ENCODE measurements at regions of chr4 and their contacts with region 1.

Region 1: DNA sequence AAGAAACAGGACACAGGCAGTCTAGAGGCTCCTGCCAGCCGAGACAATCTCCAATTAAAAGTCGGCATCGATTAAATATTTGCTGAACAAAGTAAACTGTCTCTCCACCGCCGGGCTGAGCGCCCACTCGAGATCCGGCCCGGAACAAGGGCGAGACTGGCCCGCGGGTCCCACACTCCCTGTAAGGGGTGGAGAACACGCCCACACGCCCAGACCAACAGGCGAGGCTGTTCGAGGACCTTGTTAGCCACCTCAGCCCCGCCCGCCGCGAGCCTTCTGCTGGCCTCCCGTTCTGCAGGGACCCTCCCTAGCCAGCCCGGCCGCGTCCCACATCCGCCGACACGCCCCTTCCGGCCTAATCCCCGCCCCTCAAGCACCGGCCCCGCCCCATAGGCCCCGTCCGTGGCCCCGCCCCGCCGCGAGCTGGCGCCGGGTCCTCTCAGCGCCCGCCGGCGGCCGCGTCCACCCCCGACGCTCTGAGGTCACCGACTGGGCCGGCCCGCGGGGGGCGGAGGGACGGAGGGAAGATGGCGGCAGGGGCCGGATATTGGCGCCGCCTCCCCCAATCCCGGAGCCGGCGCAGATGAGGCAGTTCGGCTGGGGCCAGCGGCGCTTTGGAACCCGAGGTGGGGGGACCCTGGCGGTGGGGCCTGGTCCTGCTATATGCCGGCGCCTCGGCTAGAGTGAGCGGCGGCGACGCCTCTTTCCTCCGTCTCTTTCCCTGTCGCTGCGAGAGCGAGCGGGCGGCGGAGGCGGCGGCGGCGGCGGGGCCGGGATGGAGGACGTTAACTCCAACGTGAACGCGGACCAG is at the start of gene SLAIN2:
- DNase-seq: peak; percentile 98
- H3K4me3 Mint-ChIP-seq: peak within 1 kb of the TSS; percentile 98
- H3K27ac Mint-ChIP-seq: peak within 1 kb of the TSS; percentile 97
- H3K4me1 Mint-ChIP-seq: peaks cover 61% of the 10 kb centered on the region
- H3K27me3 Mint-ChIP-seq: no peaks in the 10 kb centered on the region
- total RNA-seq, gene SLAIN2: 60.4 and 67.1 TPM in 2 replicates

Region 2: GRCh38 chr4:47914220-47914925 is 426.8 kb before region 1 on chr4 and contains the start of gene NFXL1:
- intact Hi-C with region 1: loop called (anchors 2 kb)
- DNase-seq: peak; percentile 93
- H3K4me3 Mint-ChIP-seq: peak within 1 kb of the TSS; percentile 90
- H3K27ac Mint-ChIP-seq: peak within 1 kb of the TSS; percentile 83
- H3K4me1 Mint-ChIP-seq: peaks cover 22% of the 10 kb centered on the region
- H3K27me3 Mint-ChIP-seq: no peaks in the 10 kb centered on the region
- total RNA-seq, gene NFXL1: 11.9 and 13.3 TPM in 2 replicates

Region 3: DNA sequence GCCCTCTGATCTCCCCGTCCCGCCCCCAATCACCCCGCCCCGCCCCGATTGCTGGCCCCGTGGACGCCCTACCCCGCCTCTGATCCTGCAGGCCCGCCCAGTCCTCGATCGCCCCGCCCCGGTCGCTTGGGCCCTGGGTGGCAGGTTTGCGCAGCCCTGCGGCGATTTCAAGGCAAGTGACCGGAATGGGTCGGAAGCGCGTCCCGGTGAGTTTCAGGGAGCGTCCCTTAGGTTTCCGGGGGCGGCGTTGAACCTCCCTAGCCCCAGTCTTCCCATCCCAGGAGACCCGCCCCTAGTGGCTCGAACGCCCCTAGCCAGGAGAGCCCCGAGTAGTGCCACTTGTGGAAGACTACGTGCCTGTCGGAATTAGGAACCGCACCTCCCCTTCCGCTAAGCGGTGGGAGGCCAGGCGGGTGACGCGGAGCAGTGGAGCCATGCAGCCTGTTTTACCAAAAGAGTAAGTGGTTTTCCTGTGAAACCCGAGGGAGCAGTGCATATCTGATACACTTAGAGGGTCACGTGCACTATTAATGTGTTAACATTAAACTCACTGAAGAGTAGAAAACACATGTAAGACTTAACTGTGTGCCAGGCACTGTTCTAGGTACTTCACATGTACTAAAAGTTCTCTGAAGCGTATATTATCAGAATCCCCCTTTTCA is 71.2 kb before region 1 on chr4:
- intact Hi-C with region 1: loop called (anchors 1 kb)
- DNase-seq: peak; percentile 79
- H3K4me3 Mint-ChIP-seq: peak overlapping the region; percentile 93
- H3K27ac Mint-ChIP-seq: peak overlapping the region; percentile 87
- H3K4me1 Mint-ChIP-seq: peaks cover 19% of the 10 kb centered on the region
- H3K27me3 Mint-ChIP-seq: no peaks in the 10 kb centered on the region

Region 4: DNA sequence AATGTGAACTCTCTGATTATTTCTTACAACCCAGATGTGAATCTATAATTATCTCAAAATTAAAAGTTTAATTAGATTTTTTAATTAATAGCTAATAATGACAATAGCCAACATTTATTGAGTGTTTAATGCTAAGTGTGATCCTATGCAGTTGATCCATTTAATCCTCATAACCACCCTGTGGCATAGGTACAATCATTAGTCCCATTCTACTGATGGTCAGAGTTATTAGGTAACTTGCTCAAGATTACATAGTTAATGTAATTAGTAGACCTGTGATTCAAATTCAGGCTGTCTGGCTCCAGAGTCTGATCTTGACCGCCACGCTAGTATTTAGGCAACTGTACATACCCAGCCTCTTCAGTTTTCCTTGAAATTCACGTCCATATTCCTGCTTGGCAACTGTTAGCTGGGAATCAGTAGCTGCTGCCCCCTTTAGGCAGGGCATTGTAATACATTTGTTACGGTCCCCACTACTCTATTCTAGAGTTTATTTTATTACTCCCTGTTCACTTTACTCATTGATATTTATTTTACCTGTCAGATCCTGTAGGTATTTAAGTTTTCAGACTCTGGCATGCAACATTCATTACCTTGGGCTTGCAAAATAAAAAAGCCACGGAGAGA is 50.9 kb before region 1 on chr4:
- intact Hi-C with region 1: no loop called
- DNase-seq: no peak
- H3K4me3 Mint-ChIP-seq: no peak overlapping the region
- H3K27ac Mint-ChIP-seq: no peak overlapping the region
- H3K4me1 Mint-ChIP-seq: peaks cover 1% of the 10 kb centered on the region
- H3K27me3 Mint-ChIP-seq: no peaks in the 10 kb centered on the region

Region 5: DNA sequence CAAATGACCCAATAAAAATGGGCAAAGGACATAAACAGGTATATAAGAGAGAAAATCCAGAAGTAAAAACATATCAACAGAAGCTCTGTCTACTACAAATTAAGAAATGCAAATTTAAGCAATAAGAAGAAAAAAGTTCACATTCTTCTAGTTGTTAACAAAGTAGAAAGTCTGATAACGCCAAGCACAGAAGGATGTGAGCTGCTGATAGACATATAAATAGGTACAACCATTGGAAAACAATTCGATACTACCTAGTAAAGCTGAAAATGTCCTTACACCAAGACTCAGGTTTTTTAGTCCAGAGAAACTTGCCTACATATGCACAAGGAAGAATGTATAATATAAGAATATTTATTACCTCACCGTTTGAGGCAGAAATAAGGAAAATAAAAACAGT is 35.7 kb before region 1 on chr4:
- intact Hi-C with region 1: no loop called
- DNase-seq: no peak
- H3K4me3 Mint-ChIP-seq: no peak overlapping the region
- H3K27ac Mint-ChIP-seq: no peak overlapping the region
- H3K4me1 Mint-ChIP-seq: no peaks in the 10 kb centered on the region
- H3K27me3 Mint-ChIP-seq: peaks cover 20% of the 10 kb centered on the region

Region 6: GRCh38 chr4:48315728-48316630 is 25.2 kb before region 1 on chr4:
- intact Hi-C with region 1: loop called (anchors 1 kb)
- DNase-seq: no peak
- H3K4me3 Mint-ChIP-seq: no peak overlapping the region
- H3K27ac Mint-ChIP-seq: no peak overlapping the region
- H3K4me1 Mint-ChIP-seq: peaks cover 4% of the 10 kb centered on the region
- H3K27me3 Mint-ChIP-seq: peaks cover 2% of the 10 kb centered on the region

Region 7: GRCh38 chr4:48403779-48404178 is 62.6 kb after region 1 on chr4:
- intact Hi-C with region 1: loop called (anchors 2 kb)
- DNase-seq: no peak
- H3K4me3 Mint-ChIP-seq: no peak overlapping the region
- H3K27ac Mint-ChIP-seq: no peak overlapping the region
- H3K4me1 Mint-ChIP-seq: peaks cover 25% of the 10 kb centered on the region
- H3K27me3 Mint-ChIP-seq: no peaks in the 10 kb centered on the region

Region 8: GRCh38 chr4:48830706-48831531 is 489.7 kb after region 1 on chr4 and contains the start of gene OCIAD1:
- intact Hi-C with region 1: loop called (anchors 2 kb)
- DNase-seq: peak; percentile 94
- H3K4me3 Mint-ChIP-seq: peak within 1 kb of the TSS; percentile 100
- H3K27ac Mint-ChIP-seq: peak within 1 kb of the TSS; percentile 100
- H3K4me1 Mint-ChIP-seq: peaks cover 20% of the 10 kb centered on the region
- H3K27me3 Mint-ChIP-seq: peaks cover 8% of the 10 kb centered on the region
- total RNA-seq, gene OCIAD1: 114 and 116 TPM in 2 replicates

Measured in activated T-helper 2 cell treated with anti-CD3 and anti-CD28 coated beads, Interferon-gamma antibody, Interleukin-2, Interleukin-4, amounts not matched to agents 10 μg/mL and 5 μg/mL and 100 μg/mL, durations not matched to agents 14 hours and 24 hours and 36 hours (primary cell).